AG04449 (cell line): ENCODE measurements at regions of chr3 and their contacts with region 1.

Region 1: DNA sequence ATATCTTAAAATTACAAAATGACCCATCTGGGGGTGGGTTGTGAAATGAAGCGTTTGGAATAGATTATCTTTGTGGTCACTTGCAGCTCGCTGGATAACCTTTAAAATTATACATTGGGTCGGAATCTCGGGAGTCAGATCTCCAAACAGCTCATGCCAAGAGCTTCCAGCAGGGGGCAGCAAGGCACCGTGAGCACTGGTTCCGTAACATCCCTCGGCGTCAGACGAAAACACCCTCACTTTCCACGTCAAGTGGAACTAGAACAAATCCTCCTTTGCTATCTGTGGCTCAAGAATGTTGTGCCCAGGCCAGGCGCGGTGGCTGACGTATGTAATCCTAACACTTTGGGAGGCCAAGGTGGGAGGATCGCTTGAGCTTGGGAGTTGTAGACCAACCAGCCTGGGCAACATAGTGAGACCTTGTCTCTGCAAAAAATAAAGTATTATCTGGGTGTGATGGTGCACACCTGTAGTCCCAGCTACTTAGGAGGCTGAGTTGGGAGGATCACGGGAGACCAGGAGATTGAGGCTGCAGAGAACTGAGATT is 31.1 kb downstream of the UMPS start:
- DNase-seq: peak; percentile 57
- H3K4me3 ChIP-seq: no peak overlapping the region
- CTCF ChIP-seq: peak; percentile 89

Region 2: GRCh38 chr3:124714223-124714853 is 47.0 kb before region 1 on chr3:
- CTCF ChIA-PET with region 1: no interaction called
- POLR2A ChIA-PET with region 1: no interaction called
- DNase-seq: no peak
- H3K4me3 ChIP-seq: no peak overlapping the region
- CTCF ChIP-seq: no peak

Region 3: GRCh38 chr3:124747111-124747981 is 14.0 kb before region 1 on chr3:
- CTCF ChIA-PET with region 1: interaction called, 21 read pairs
- POLR2A ChIA-PET with region 1: interaction called, 4 read pairs
- DNase-seq: no peak
- H3K4me3 ChIP-seq: no peak overlapping the region
- CTCF ChIP-seq: no peak

Region 4: DNA sequence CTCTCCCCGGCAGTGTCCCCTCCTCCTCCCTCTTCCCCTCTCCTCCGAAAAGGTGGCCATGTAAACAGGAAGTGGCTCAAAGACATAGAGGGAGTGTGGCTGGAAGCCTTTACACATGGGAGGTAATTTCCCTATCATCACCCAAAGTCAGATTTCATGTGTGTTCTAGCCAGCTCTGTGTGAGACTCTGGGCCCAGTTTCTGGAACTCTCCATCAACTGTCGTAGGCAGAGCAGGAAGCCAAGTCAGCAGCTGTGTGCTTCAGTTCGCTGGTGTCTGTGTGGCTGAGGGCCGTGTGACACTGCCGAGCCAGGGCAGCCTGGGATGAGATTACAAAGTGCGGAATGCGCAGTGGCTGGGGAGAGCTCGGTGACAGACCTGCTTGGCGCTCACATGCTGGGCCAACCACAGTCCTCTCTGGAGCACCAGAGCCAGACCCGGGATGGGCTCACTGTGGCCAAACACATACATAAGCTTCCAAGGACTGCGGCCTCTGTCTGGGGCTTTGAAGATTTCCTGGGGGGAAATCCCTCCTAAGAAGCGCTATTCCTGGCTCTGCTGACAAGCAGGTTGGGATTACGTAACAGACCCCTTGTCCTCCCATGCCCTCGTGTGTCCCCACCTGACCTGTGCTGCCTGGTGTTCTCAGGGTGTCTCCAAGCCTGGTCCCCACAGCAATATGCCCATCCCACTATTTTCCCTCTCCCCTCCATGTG is 19.6 kb after region 1 on chr3:
- CTCF ChIA-PET with region 1: interaction called, 52 read pairs
- POLR2A ChIA-PET with region 1: no interaction called
- DNase-seq: no peak
- H3K4me3 ChIP-seq: 0 out of 2 replicates have a peak overlapping the region, but pooled peaks have one; percentile 3
- CTCF ChIP-seq: no peak

Region 5: GRCh38 chr3:124826703-124827102 is 65.4 kb after region 1 on chr3:
- CTCF ChIA-PET with region 1: interaction called, 10 read pairs
- POLR2A ChIA-PET with region 1: no interaction called
- DNase-seq: peak; percentile 60
- H3K4me3 ChIP-seq: no peak overlapping the region
- CTCF ChIP-seq: no peak

Region 6: GRCh38 chr3:124890282-124891190 is 129.2 kb after region 1 on chr3:
- CTCF ChIA-PET with region 1: interaction called, 42 read pairs
- POLR2A ChIA-PET with region 1: no interaction called
- DNase-seq: no peak
- H3K4me3 ChIP-seq: no peak overlapping the region
- CTCF ChIP-seq: no peak

Region 7: GRCh38 chr3:124916837-124917409 is 155.6 kb after region 1 on chr3:
- CTCF ChIA-PET with region 1: interaction called, 14 read pairs
- POLR2A ChIA-PET with region 1: no interaction called
- DNase-seq: no peak
- H3K4me3 ChIP-seq: no peak overlapping the region
- CTCF ChIP-seq: no peak

Region 8: DNA sequence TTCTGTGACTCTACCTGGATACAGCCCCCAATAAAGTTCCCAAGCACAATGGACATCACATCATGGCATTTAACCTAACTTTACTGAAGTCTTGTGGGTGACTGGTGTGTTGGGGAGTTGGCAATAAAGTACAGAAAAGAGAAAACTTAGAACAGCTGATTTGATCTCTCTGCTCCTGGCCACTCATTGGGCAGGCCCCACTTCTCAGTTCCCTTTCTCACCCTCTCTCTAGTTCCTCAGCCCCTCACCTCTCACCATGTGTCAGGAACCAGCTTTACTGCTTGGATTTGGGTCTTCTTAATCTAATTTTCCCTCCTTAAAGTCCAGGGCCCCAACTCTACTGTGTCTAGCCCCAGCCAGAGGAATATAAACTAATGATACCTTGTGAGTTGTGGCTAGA is 173.9 kb after region 1 on chr3:
- CTCF ChIA-PET with region 1: interaction called, 13 read pairs
- POLR2A ChIA-PET with region 1: no interaction called
- DNase-seq: no peak
- H3K4me3 ChIP-seq: no peak overlapping the region
- CTCF ChIP-seq: no peak